ENCODE measurements at regions of chr10 and their contacts with region 1.

Region 1: GRCh38 chr10:71963756-71964668 is at the start of gene CHST3:
- DNase-seq: peak; percentile 19 to 67
- H3K4me3 ChIP-seq: peak within 1 kb of the TSS; percentile 53
- H3K4me1 ChIP-seq: peaks cover 24% of the 10 kb centered on the region
- H3K27me3 ChIP-seq: no peaks in the 10 kb centered on the region

Region 2: GRCh38 chr10:71431239-71432100 is 532.5 kb before region 1 on chr10:
- in situ Hi-C with region 1: no loop called
- DNase-seq: no peak
- H3K4me3 ChIP-seq: no peak overlapping the region
- H3K4me1 ChIP-seq: no peaks in the 10 kb centered on the region
- H3K27me3 ChIP-seq: no peaks in the 10 kb centered on the region

Region 3: DNA sequence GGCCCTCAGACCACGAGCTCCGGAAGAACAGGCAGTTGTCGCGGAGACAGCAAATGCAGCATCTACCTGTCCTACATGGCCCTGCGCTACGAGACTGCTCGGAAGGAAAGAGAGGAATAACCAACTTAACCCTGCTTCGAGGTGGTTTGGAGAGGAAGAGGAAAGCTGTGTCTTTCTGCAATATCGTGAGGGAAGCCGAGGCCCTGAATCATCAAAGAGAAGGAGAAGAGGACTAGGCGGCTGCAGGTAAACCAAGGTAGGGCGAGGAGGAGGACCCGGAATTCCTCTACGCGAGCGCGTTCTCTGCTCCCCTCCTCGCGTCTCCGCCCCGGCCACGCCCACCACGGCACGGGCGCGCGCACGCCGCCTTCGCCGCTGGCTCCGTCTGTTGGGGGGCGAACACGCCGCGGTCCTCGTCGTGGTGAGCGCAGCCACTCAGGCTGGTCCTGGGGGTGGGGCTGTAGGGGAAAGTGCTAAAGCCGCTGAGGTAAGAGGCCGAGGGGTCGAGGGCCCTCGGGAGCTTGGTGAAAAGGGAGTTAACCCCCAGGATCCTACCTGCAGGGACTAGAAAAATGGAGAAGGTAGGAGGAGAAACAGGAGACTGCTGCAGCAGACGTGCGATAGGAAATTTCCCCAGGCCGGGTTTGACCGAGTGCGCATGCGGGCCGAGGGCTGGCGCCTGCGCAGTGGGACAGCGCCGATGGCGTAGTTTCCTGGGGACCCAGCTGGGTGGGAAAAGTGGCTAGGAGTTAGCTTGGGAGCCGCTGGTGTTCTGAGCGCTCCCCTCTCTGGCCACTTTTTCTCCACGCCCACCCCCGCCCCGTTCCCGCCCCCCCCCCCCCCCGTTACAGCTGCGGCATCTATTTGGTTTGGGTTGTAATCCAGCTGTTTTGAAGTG is 251.9 kb after region 1 on chr10 and contains the starts of genes ANAPC16 and ASCC1:
- in situ Hi-C with region 1: loop called (anchors 25 kb)
- DNase-seq: peak; percentile 88 to 93
- H3K4me3 ChIP-seq: peak within 1 kb of the TSS; percentile 66
- H3K4me1 ChIP-seq: peaks cover 21% of the 10 kb centered on the region
- H3K27me3 ChIP-seq: no peaks in the 10 kb centered on the region